ENCODE measurements at regions of chr6 and their contacts with region 1.

Region 1: GRCh38 chr6:3742426-3743344 is 8.8 kb downstream of the PXDC1 start:
- DNase-seq: peak; percentile 92
- ATAC-seq: peak; percentile 28
- H3K4me3 ChIP-seq: peak overlapping the region in 4 of 5 experiments; percentile 26 to 44 (median 29)
- H3K4me3 Mint-ChIP-seq: peak overlapping the region; percentile 55
- H3K27ac ChIP-seq: peak overlapping the region; percentile 38 to 64
- H3K27ac Mint-ChIP-seq: peak overlapping the region; percentile 67
- H3K4me1 ChIP-seq: peaks cover 33 to 38% of the 10 kb centered on the region in 2 donors
- H3K4me1 Mint-ChIP-seq: peaks cover 47% of the 10 kb centered on the region
- H3K27me3 ChIP-seq: peaks cover 0 to 4% (median 0%) of the 10 kb centered on the region in 4 experiments
- H3K27me3 Mint-ChIP-seq: no peaks in the 10 kb centered on the region
- CTCF ChIP-seq: peak; percentile 91

Region 2: DNA sequence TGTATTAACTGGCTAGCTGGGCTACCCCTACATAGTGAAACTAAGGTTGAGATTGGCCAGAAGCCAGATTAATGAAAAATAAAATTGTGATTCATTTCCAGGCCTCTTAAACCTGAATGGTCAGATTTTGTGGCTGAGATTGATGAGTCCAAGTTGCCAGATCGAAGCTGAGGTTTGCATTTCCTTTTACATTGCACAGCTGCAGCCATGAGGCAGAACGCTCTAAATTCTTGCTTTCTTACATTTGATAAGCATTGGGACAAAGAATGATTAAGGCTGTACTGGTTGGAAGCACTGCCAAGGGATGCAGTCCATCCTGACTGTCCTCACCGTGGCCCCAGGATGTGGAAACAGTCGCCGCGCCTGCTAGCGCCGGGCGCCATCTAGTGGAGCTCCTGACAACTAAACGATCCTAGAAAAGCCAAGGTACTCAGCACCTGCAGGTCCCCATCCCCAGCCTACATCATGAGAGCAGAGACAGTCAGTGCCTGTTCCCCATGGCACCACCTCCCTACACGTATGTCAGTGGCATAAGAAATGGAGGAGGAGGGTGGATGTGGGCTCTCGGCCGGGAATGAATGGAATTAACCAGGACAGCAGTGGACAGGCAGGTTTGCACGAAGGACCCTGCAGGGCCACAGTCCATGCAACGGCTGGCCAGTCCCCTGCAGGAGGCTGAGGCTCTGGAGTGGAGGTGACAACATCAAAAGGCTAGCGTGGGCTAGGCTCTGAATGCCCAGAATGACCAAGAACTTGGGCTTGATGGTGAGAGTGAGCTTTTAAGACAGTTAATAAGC is 10.1 kb before region 1 on chr6:
- CTCF ChIA-PET with region 1: interaction called, 20 read pairs
- POLR2A ChIA-PET with region 1: no interaction called
- intact Hi-C with region 1: no loop called
- DNase-seq: peak; percentile 72
- ATAC-seq: peak; percentile 67
- H3K4me3 ChIP-seq: no peak overlapping the region
- H3K4me3 Mint-ChIP-seq: no peak overlapping the region
- H3K27ac ChIP-seq: no peak overlapping the region
- H3K27ac Mint-ChIP-seq: no peak overlapping the region
- H3K4me1 ChIP-seq: no peaks in the 10 kb centered on the region
- H3K4me1 Mint-ChIP-seq: peaks cover 2% of the 10 kb centered on the region
- H3K27me3 ChIP-seq: no peaks in the 10 kb centered on the region
- H3K27me3 Mint-ChIP-seq: no peaks in the 10 kb centered on the region
- CTCF ChIP-seq: peak; percentile 82

Region 3: GRCh38 chr6:3848925-3849605 is 106.4 kb after region 1 on chr6 and contains the start of gene FAM50B:
- CTCF ChIA-PET with region 1: interaction called, 82 read pairs
- POLR2A ChIA-PET with region 1: interaction called, 13 read pairs
- intact Hi-C with region 1: loop called (anchors 1 kb)
- DNase-seq: peak; percentile 92
- ATAC-seq: peak; percentile 94
- H3K4me3 ChIP-seq: peak within 1 kb of the TSS; percentile 11 to 66 (median 65)
- H3K4me3 Mint-ChIP-seq: peak within 1 kb of the TSS; percentile 90
- H3K27ac ChIP-seq: peak within 1 kb of the TSS; percentile 54 to 65
- H3K27ac Mint-ChIP-seq: peak within 1 kb of the TSS; percentile 94
- H3K4me1 ChIP-seq: peaks cover 6 to 21% of the 10 kb centered on the region in 2 donors
- H3K4me1 Mint-ChIP-seq: peaks cover 21% of the 10 kb centered on the region
- H3K27me3 ChIP-seq: no peaks in the 10 kb centered on the region
- H3K27me3 Mint-ChIP-seq: no peaks in the 10 kb centered on the region
- CTCF ChIP-seq: peak; percentile 84
- total RNA-seq, gene FAM50B: 8.3 and 9.8 TPM in 2 replicates

Region 4: GRCh38 chr6:3977875-3978711 is 235.4 kb after region 1 on chr6:
- CTCF ChIA-PET with region 1: interaction called, 64 read pairs
- POLR2A ChIA-PET with region 1: no interaction called
- intact Hi-C with region 1: loop called (anchors 1 kb)
- DNase-seq: peak; percentile 65
- ATAC-seq: peak; percentile 95
- H3K4me3 ChIP-seq: no peak overlapping the region
- H3K4me3 Mint-ChIP-seq: no peak overlapping the region
- H3K27ac ChIP-seq: no peak overlapping the region
- H3K27ac Mint-ChIP-seq: no peak overlapping the region
- H3K4me1 ChIP-seq: peaks cover 0 to 7% of the 10 kb centered on the region in 2 donors
- H3K4me1 Mint-ChIP-seq: peaks cover 4% of the 10 kb centered on the region
- H3K27me3 ChIP-seq: peaks cover 0 to 3% (median 0%) of the 10 kb centered on the region in 4 experiments
- H3K27me3 Mint-ChIP-seq: peaks cover 8% of the 10 kb centered on the region
- CTCF ChIP-seq: peak; percentile 70

Region 5: GRCh38 chr6:4018172-4018905 is 275.7 kb after region 1 on chr6:
- CTCF ChIA-PET with region 1: interaction called, 28 read pairs
- POLR2A ChIA-PET with region 1: no interaction called
- intact Hi-C with region 1: no loop called
- DNase-seq: peak; percentile 98
- ATAC-seq: peak; percentile 73
- H3K4me3 ChIP-seq: peak overlapping the region; percentile 71 to 91 (median 80)
- H3K4me3 Mint-ChIP-seq: peak overlapping the region; percentile 96
- H3K27ac ChIP-seq: peak overlapping the region; percentile 94 to 97
- H3K27ac Mint-ChIP-seq: peak overlapping the region; percentile 99
- H3K4me1 ChIP-seq: peaks cover 30 to 40% of the 10 kb centered on the region in 2 donors
- H3K4me1 Mint-ChIP-seq: peaks cover 70% of the 10 kb centered on the region
- H3K27me3 ChIP-seq: no peaks in the 10 kb centered on the region
- H3K27me3 Mint-ChIP-seq: no peaks in the 10 kb centered on the region
- CTCF ChIP-seq: peak; percentile 43

Region 6: GRCh38 chr6:4402439-4402976 is 659.8 kb after region 1 on chr6:
- CTCF ChIA-PET with region 1: no interaction called
- POLR2A ChIA-PET with region 1: no interaction called
- intact Hi-C with region 1: loop called (anchors 10 kb)
- DNase-seq: no peak
- ATAC-seq: no peak
- H3K4me3 ChIP-seq: no peak overlapping the region
- H3K4me3 Mint-ChIP-seq: no peak overlapping the region
- H3K27ac ChIP-seq: no peak overlapping the region
- H3K27ac Mint-ChIP-seq: no peak overlapping the region
- H3K4me1 ChIP-seq: peaks cover 2 to 4% of the 10 kb centered on the region in 2 donors
- H3K4me1 Mint-ChIP-seq: peaks cover 15% of the 10 kb centered on the region
- H3K27me3 ChIP-seq: peaks cover 0 to 3% (median 0%) of the 10 kb centered on the region in 4 experiments
- H3K27me3 Mint-ChIP-seq: peaks cover 10% of the 10 kb centered on the region
- CTCF ChIP-seq: no peak

Region 7: GRCh38 chr6:4677011-4677750 is 934.5 kb after region 1 on chr6:
- CTCF ChIA-PET with region 1: no interaction called
- POLR2A ChIA-PET with region 1: no interaction called
- intact Hi-C with region 1: no loop called
- DNase-seq: no peak
- ATAC-seq: no peak
- H3K4me3 ChIP-seq: no peak overlapping the region
- H3K4me3 Mint-ChIP-seq: no peak overlapping the region
- H3K27ac ChIP-seq: no peak overlapping the region
- H3K27ac Mint-ChIP-seq: no peak overlapping the region
- H3K4me1 ChIP-seq: no peaks in the 10 kb centered on the region
- H3K4me1 Mint-ChIP-seq: no peaks in the 10 kb centered on the region
- H3K27me3 ChIP-seq: peaks cover 0 to 3% (median 1%) of the 10 kb centered on the region in 4 experiments
- H3K27me3 Mint-ChIP-seq: peaks cover 19% of the 10 kb centered on the region
- CTCF ChIP-seq: no peak